Left ventricle myocardium superior (tissue), 1 donor: ENCODE measurements at regions of chr1 and their contacts with region 1.

Region 1: GRCh38 chr1:150072959-150073358 is 5.4 kb downstream of the VPS45 start:
- DNase-seq: no peak
- ATAC-seq: peak; percentile 51

Region 2: DNA sequence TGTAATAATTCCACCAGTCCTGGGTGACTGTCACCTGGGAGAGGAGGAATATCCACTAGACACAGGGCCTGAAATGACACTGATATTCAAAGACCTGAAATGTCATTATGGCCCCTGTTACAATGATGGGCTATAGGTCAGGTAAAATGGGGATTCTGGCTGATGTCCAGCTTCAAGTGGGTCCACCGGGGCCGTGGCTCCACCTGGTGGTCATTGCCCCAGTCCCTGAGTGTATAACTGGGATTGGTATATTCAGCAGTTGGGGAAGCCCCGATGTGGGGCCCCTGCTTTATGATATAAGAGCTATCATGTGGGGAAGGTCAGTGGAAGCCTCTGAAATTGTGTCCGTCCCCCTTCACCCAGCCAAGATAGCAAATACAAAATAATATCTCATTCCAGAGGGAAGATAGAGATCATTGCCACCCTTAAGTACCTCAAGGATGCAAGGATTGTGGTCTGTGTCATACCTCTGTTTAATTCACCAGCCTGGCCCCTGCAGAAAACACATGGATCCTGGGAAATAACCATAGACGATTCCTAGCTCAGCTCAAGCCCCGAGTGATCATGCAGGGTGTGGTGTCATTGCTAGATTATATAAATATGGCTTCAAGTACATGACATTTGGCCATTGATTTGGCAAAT is 96.1 kb after region 1 on chr1:
- intact Hi-C with region 1: loop called (anchors 1 kb)
- DNase-seq: peak; percentile 83
- ATAC-seq: peak; percentile 58